PC-9 (cell line): ENCODE measurements at regions of chr1 and their contacts with region 1.

Region 1: DNA sequence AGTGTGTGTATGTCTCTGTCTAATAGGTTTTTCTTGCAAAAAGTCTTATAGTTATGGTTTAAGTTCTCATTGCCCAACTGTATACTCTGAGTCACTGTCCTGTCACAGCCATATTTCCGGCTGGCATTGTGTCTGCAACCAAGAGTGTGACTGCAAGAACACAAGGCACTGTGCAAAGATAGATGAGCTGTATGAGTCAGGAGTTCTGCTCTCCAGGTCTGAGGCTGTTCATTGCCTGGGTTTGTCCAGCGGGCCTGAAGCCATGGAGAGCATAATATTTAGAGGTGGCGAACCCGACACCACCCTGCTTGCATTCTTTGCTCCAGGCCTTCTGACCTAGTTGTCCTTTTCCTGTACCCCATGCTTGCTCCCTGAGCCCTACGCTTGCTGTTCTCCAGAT is 50.9 kb upstream of the CNIH3 start:
- DNase-seq: peak; percentile 90 to 99
- H3K4me3 ChIP-seq: peak overlapping the region; percentile 41; the same call in 1 of the 2 replicates
- H3K27ac ChIP-seq: peak overlapping the region; percentile 98
- H3K4me1 ChIP-seq: peaks cover 62% of the 10 kb centered on the region
- H3K27me3 ChIP-seq: no peaks in the 10 kb centered on the region
- CTCF ChIP-seq: no peak

Region 2: DNA sequence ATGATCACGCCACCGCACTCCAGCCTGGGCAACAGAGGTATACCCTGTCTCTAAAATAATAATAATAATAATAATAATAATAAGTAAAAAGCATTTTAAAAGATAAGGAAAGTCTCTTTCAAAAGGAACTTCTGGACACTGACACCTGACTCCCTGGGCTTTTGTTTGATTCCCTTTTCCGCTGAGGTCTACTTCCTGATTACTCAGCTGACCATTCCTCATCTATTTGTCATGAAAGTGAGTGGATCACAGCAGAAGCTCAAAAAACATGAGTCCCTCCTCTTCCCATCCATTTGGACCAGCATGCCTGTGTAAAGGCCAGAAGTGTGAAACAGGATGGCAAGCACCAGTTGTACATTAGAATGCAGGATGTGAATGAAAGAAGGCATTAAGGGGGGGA is 512.4 kb before region 1 on chr1:
- CTCF ChIA-PET with region 1: no interaction called
- POLR2A ChIA-PET with region 1: no interaction called
- intact Hi-C with region 1: no loop called
- DNase-seq: peak in 1 of 2 experiments; percentile 76
- H3K4me3 ChIP-seq: no peak overlapping the region
- H3K27ac ChIP-seq: peak overlapping the region; percentile 42
- H3K4me1 ChIP-seq: peaks cover 33% of the 10 kb centered on the region
- H3K27me3 ChIP-seq: no peaks in the 10 kb centered on the region
- CTCF ChIP-seq: no peak

Region 3: GRCh38 chr1:224447251-224447650 is 117.9 kb before region 1 on chr1:
- CTCF ChIA-PET with region 1: no interaction called
- POLR2A ChIA-PET with region 1: no interaction called
- intact Hi-C with region 1: no loop called
- DNase-seq: peak in 1 of 2 experiments; percentile 30
- H3K4me3 ChIP-seq: no peak overlapping the region
- H3K27ac ChIP-seq: no peak overlapping the region
- H3K4me1 ChIP-seq: no peaks in the 10 kb centered on the region
- H3K27me3 ChIP-seq: no peaks in the 10 kb centered on the region
- CTCF ChIP-seq: no peak

Region 4: DNA sequence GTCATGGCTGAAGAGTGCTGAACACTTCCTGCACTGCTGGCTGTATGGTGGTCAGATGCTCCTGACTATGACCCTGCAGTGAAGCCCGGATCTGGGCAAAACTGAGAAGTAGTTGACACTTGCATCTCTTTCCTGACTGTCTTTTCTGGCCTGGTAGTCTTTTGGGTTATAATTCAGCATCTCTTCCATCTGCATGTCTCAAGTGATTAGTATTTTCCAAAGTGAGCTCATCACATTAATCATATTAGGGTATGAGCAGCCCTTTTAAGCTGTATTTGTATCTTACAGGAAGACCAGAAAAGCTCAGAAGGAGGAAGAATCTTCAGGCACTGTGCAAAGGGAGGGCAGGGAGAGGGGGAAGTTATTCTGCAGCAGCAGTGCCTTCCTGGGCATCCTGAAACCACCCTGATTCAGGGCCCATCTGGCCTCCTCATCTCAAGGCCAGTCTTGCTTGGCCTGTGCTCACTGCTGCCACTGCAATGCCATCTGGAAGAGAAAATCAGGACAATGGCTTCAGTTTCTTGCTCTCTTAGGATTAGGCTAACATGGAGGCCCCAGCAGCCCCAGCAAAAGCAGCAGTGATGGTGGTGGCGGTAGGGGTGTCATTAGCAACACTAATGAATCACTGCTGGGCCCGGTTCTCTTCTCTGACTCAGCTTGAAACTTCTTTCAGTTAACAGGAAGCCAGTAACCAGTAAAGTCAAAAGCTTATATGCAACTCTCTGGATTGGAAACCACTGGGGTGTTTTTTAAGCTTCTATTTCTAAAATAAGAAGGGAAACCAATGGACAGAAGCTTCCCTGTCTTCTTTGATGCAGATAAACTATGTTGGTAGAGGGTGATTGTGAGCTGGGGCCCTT is 67.2 kb before region 1 on chr1:
- CTCF ChIA-PET with region 1: no interaction called
- POLR2A ChIA-PET with region 1: no interaction called
- intact Hi-C with region 1: no loop called
- DNase-seq: peak; percentile 73 to 89
- H3K4me3 ChIP-seq: peak overlapping the region; percentile 39; the same call in 1 of the 2 replicates
- H3K27ac ChIP-seq: peak overlapping the region; percentile 99
- H3K4me1 ChIP-seq: peaks cover 57% of the 10 kb centered on the region
- H3K27me3 ChIP-seq: no peaks in the 10 kb centered on the region
- CTCF ChIP-seq: no peak

Region 5: DNA sequence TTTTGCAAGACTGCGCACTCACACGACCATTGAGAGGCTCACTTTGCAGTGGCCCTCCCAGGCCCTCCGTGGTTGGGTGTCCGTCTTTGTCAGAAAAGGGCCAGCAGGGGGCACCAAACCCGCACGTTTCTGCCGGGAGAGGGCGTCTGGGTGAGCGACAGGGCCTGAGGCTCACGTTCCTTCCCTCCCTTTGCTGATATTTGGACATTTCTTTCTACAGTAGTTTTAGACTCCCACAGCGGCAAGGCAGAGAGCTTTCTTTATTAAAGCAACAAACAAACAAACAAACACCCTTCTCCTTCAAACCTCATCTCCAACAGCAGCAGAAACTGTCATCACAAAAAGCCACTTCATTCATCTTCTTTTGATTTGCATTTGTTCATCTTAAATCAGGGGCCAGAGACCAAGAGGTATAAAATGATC is 51.4 kb before region 1 on chr1:
- CTCF ChIA-PET with region 1: interaction called, 3 read pairs
- POLR2A ChIA-PET with region 1: no interaction called
- intact Hi-C with region 1: loop called (anchors 2 kb)
- DNase-seq: peak; percentile 71 to 92
- H3K4me3 ChIP-seq: no peak overlapping the region
- H3K27ac ChIP-seq: no peak overlapping the region
- H3K4me1 ChIP-seq: peaks cover 37% of the 10 kb centered on the region
- H3K27me3 ChIP-seq: no peaks in the 10 kb centered on the region
- CTCF ChIP-seq: peak; percentile 94

Region 6: GRCh38 chr1:224528900-224529299 is 36.3 kb before region 1 on chr1:
- CTCF ChIA-PET with region 1: no interaction called
- POLR2A ChIA-PET with region 1: no interaction called
- intact Hi-C with region 1: no loop called
- DNase-seq: peak in 1 of 2 experiments; percentile 25
- H3K4me3 ChIP-seq: no peak overlapping the region
- H3K27ac ChIP-seq: no peak overlapping the region
- H3K4me1 ChIP-seq: peaks cover 30% of the 10 kb centered on the region
- H3K27me3 ChIP-seq: no peaks in the 10 kb centered on the region
- CTCF ChIP-seq: no peak

Region 7: GRCh38 chr1:224542783-224543440 is 22.3 kb before region 1 on chr1:
- CTCF ChIA-PET with region 1: interaction called, 3 read pairs
- POLR2A ChIA-PET with region 1: interaction called, 5 read pairs
- intact Hi-C with region 1: loop called (anchors 1 kb)
- DNase-seq: peak; percentile 65 to 98
- H3K4me3 ChIP-seq: peak overlapping the region; percentile 19; the same call in 1 of the 2 replicates
- H3K27ac ChIP-seq: peak overlapping the region; percentile 98
- H3K4me1 ChIP-seq: peaks cover 46% of the 10 kb centered on the region
- H3K27me3 ChIP-seq: no peaks in the 10 kb centered on the region
- CTCF ChIP-seq: no peak

Region 8: GRCh38 chr1:224592636-224593582 is 27.7 kb after region 1 on chr1:
- CTCF ChIA-PET with region 1: no interaction called
- POLR2A ChIA-PET with region 1: no interaction called
- intact Hi-C with region 1: loop called (anchors 2 kb)
- DNase-seq: peak in 1 of 2 experiments; percentile 88
- H3K4me3 ChIP-seq: no peak overlapping the region
- H3K27ac ChIP-seq: no peak overlapping the region
- H3K4me1 ChIP-seq: no peaks in the 10 kb centered on the region
- H3K27me3 ChIP-seq: no peaks in the 10 kb centered on the region
- CTCF ChIP-seq: no peak

Region 9: DNA sequence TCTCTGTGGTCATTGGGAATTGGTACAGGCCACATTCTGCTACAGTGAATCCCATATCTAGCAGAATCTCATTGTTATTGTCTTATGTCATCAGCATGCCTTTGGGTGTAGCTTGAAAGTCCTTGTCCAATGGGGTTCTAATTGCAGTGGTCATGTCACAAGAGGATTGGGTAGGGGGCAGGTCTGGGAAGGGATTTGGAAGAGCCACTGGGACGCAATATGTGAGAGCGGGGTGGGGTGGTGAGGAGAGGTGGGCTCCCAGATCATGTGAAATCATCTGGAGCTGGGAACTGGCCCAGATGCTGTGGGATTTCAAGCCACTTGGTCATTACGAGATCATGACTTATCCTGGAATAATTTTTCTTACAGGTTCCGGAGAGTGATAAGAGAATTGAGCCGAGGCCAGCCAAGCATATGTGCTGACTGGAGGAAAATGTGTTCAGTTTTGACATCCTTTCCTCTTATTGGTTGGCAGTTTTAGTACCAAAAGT is 67.2 kb after region 1 on chr1:
- CTCF ChIA-PET with region 1: no interaction called
- POLR2A ChIA-PET with region 1: interaction called, 6 read pairs
- intact Hi-C with region 1: loop called (anchors 2 kb)
- DNase-seq: no peak
- H3K4me3 ChIP-seq: no peak overlapping the region
- H3K27ac ChIP-seq: no peak overlapping the region
- H3K4me1 ChIP-seq: peaks cover 24% of the 10 kb centered on the region
- H3K27me3 ChIP-seq: no peaks in the 10 kb centered on the region
- CTCF ChIP-seq: no peak

Region 10: DNA sequence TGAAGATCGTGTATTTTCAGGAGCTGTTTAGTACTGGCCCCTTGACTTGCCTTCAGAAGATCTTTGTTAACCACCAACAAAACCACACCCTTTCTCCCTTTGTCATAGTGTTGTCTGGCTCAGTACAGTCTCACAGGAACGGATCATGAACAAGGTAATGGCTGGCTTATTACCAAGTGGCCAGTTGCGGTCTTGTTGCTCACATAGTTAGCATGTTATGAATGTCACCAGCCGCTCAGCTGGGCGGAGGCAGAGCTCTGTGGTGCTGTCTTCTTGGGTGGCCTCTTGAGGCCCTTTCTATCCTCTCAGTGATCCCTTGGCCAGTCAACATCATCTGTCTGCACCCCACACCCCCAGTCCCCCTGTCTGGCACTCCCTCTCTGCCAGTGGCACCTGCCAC is 72.3 kb after region 1 on chr1:
- CTCF ChIA-PET with region 1: no interaction called
- POLR2A ChIA-PET with region 1: interaction called, 6 read pairs
- intact Hi-C with region 1: loop called (anchors 1 kb)
- DNase-seq: peak in 1 of 2 experiments; percentile 88
- H3K4me3 ChIP-seq: no peak overlapping the region
- H3K27ac ChIP-seq: no peak overlapping the region
- H3K4me1 ChIP-seq: peaks cover 8% of the 10 kb centered on the region
- H3K27me3 ChIP-seq: no peaks in the 10 kb centered on the region
- CTCF ChIP-seq: no peak

Region 11: DNA sequence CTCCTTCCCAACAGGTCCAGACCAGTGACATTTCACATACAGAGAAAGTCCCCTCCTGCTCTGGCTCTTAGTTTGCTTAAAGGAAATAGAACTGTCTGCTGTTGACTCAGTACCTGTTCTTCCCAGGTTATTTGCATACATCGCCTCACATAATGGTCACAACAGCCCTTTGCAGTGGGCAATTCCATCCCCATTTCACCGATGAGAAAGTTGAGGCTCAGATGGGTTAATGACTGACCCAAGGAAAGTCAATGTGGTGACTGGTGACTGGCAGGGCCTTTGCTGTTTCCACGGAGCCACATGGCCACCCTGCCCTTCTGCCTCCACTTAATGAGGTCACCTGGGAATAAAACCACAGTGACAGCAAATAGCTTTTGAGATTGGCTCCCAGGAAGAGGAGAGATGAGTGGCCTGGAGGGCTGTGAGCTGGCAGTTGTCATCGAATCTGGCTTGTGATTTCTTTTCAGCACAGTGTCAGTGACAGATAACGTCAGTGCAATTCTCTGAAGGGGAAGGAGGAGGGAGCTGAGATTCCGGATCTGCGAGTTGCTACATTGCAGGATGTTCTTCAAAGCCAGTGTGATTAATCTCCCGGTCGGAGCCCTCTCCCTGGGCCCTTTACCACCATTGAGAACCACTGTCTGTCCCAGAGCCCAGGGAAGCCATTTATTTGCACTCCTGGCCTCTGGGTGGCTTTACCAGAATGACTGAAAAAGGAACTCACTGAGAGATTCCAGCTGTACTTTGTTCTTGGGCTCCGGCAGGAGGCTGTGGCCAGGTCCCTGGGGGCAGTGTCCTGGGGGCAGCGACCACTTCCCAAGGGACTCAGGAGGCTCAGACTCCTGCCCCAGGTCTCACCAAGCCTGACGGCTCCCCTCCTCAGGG is 168.1 kb after region 1 on chr1:
- CTCF ChIA-PET with region 1: no interaction called
- POLR2A ChIA-PET with region 1: interaction called, 10 read pairs
- intact Hi-C with region 1: no loop called
- DNase-seq: peak; percentile 73 to 94
- H3K4me3 ChIP-seq: peak overlapping the region; percentile 40; the same call in 1 of the 2 replicates
- H3K27ac ChIP-seq: peak overlapping the region; percentile 97
- H3K4me1 ChIP-seq: peaks cover 53% of the 10 kb centered on the region
- H3K27me3 ChIP-seq: no peaks in the 10 kb centered on the region
- CTCF ChIP-seq: no peak